ENCODE measurements at regions of chr5 and their contacts with region 1.

Region 1: GRCh38 chr5:32585446-32586275 is at the start of gene SUB1:
- DNase-seq: peak; percentile 93 to 94
- ATAC-seq: peak; percentile 96 to 98 (median 97)
- H3K4me3 ChIP-seq: peak within 1 kb of the TSS; percentile 69 to 97 (median 88)
- H3K27ac ChIP-seq: peak within 1 kb of the TSS; percentile 95 to 100 (median 99)
- H3K4me1 ChIP-seq: peaks cover 0 to 81% (median 23%) of the 10 kb centered on the region in 9 donors
- H3K27me3 ChIP-seq: no peaks in the 10 kb centered on the region
- CTCF ChIP-seq: peak in 4 of 9 donors; percentile 9 to 27 (median 22)
- total RNA-seq, gene SUB1: 169 to 224 (median 188) TPM

Region 2: DNA sequence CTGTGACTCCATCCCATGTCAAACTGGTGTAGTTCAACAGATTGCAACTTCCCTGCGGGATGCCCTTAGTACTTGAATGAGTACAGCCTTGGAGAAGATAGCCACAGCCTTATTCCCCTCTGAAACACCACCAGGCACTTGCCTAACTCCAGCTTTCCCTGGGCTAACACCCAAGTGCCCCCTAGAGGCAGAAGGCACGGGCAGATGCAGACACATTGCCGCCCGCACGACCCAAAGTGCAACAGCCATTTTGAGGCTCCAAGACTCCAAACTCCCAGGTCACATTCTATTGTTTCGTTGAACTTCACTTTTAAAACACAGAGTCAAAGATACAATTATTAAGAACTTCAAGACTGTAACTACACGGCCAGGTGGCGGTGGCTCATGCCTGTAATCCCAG is 1555.7 kb before region 1 on chr5:
- intact Hi-C with region 1: no loop called
- DNase-seq: no peak
- ATAC-seq: no peak
- H3K4me3 ChIP-seq: no peak overlapping the region
- H3K27ac ChIP-seq: no peak overlapping the region
- H3K4me1 ChIP-seq: no peaks in the 10 kb centered on the region
- H3K27me3 ChIP-seq: no peaks in the 10 kb centered on the region
- CTCF ChIP-seq: no peak

Region 3: DNA sequence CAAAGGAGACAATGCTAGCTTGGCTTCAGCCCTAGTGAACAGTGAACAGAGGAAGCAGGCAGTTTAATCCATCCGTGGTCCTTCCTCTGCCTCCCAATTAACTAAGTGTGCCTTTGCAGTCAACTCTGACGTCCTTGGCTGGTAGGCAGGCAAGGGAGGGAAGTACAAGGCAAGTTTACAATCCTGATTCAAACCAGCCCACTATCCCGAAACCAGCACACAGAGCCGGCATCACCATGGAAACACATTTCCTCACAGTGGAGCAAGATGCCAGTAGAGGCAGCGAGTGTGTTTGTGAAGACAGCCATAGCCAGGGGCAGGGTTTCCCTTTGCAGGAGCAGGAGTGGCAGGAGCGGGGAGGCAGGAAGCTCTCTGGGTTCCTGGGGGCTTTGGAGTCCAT is 485.4 kb before region 1 on chr5:
- intact Hi-C with region 1: loop called in 1 of 10 experiments (anchors 10 kb)
- DNase-seq: no peak
- ATAC-seq: peak in 5 of 8 donors; percentile 18 to 45 (median 31)
- H3K4me3 ChIP-seq: no peak overlapping the region
- H3K27ac ChIP-seq: peak overlapping the region in 8 of 10 donors; percentile 24 to 77 (median 67)
- H3K4me1 ChIP-seq: peaks cover 9 to 48% (median 34%) of the 10 kb centered on the region in 9 donors
- H3K27me3 ChIP-seq: no peaks in the 10 kb centered on the region
- CTCF ChIP-seq: no peak

Region 4: GRCh38 chr5:32489791-32490582 is 95.7 kb before region 1 on chr5:
- intact Hi-C with region 1: loop called (anchors 1 to 10 kb)
- DNase-seq: peak; percentile 77 to 85
- ATAC-seq: peak; percentile 62 to 87 (median 83)
- H3K4me3 ChIP-seq: no peak overlapping the region
- H3K27ac ChIP-seq: no peak overlapping the region
- H3K4me1 ChIP-seq: peaks cover 0 to 9% (median 0%) of the 10 kb centered on the region in 9 donors
- H3K27me3 ChIP-seq: no peaks in the 10 kb centered on the region
- CTCF ChIP-seq: peak; percentile 57 to 87 (median 78)

Region 5: GRCh38 chr5:32504989-32505596 is 80.6 kb before region 1 on chr5:
- intact Hi-C with region 1: loop called in 2 of 10 experiments (anchors 5 kb)
- DNase-seq: peak; percentile 53 to 70
- ATAC-seq: peak; percentile 71 to 94 (median 90)
- H3K4me3 ChIP-seq: no peak overlapping the region
- H3K27ac ChIP-seq: peak overlapping the region in 6 of 10 donors; percentile 2 to 37 (median 36)
- H3K4me1 ChIP-seq: peaks cover 0 to 54% (median 32%) of the 10 kb centered on the region in 9 donors
- H3K27me3 ChIP-seq: peaks cover 0 to 18% (median 7%) of the 10 kb centered on the region in 7 donors
- CTCF ChIP-seq: no peak

Measured in heart right ventricle (tissue), 16 donors.